Spleen (tissue), 13 donors: ENCODE measurements at regions of chr10 and their contacts with region 1.

Region 1: GRCh38 chr10:44310762-44311562 is 73.9 kb downstream of the CXCL12 start:
- DNase-seq: peak; percentile 91
- H3K4me3 ChIP-seq: peak overlapping the region in 6 of 8 donors; percentile 8 to 62 (median 29)
- H3K27ac ChIP-seq: peak overlapping the region in 3 of 8 donors; percentile 18 to 62 (median 61)
- H3K4me1 ChIP-seq: peaks cover 3 to 20% (median 11%) of the 10 kb centered on the region in 6 donors
- H3K27me3 ChIP-seq: peaks cover 0 to 40% (median 0%) of the 10 kb centered on the region in 7 donors
- CTCF ChIP-seq: peak; percentile 52 to 91 (median 82)
- POLR2A ChIP-seq: no peak

Region 2: GRCh38 chr10:43689955-43690771 is 620.8 kb before region 1 on chr10:
- intact Hi-C with region 1: loop called (anchors 10 kb)
- DNase-seq: peak; percentile 94
- H3K4me3 ChIP-seq: peak overlapping the region; percentile 36 to 70 (median 46)
- H3K27ac ChIP-seq: peak overlapping the region; percentile 50 to 84 (median 72)
- H3K4me1 ChIP-seq: peaks cover 3 to 30% (median 21%) of the 10 kb centered on the region in 6 donors
- H3K27me3 ChIP-seq: peaks cover 0 to 44% (median 4%) of the 10 kb centered on the region in 7 donors
- CTCF ChIP-seq: peak; percentile 69 to 96 (median 92)
- POLR2A ChIP-seq: no peak

Region 3: GRCh38 chr10:44463511-44464121 is 152.7 kb after region 1 on chr10:
- intact Hi-C with region 1: no loop called
- DNase-seq: no peak
- H3K4me3 ChIP-seq: no peak overlapping the region
- H3K27ac ChIP-seq: no peak overlapping the region
- H3K4me1 ChIP-seq: peaks cover 0 to 14% (median 3%) of the 10 kb centered on the region in 6 donors
- H3K27me3 ChIP-seq: peaks cover 0 to 5% (median 0%) of the 10 kb centered on the region in 7 donors
- CTCF ChIP-seq: no peak
- POLR2A ChIP-seq: no peak